Activated CD4-positive, alpha-beta T cell treated with anti-CD3 and anti-CD28 coated beads for 36 hours (primary cell): ENCODE measurements at regions of chr19 and their contacts with region 1.

Region 1: GRCh38 chr19:3035542-3036118 is 6.5 kb upstream of the TLE2 start:
- DNase-seq: peak; percentile 97
- ATAC-seq: peak; percentile 94
- H3K4me3 Mint-ChIP-seq: peak overlapping the region; percentile 83
- H3K27ac Mint-ChIP-seq: peak overlapping the region; percentile 96
- H3K4me1 Mint-ChIP-seq: peaks cover 19% of the 10 kb centered on the region
- H3K27me3 Mint-ChIP-seq: no peaks in the 10 kb centered on the region

Region 2: DNA sequence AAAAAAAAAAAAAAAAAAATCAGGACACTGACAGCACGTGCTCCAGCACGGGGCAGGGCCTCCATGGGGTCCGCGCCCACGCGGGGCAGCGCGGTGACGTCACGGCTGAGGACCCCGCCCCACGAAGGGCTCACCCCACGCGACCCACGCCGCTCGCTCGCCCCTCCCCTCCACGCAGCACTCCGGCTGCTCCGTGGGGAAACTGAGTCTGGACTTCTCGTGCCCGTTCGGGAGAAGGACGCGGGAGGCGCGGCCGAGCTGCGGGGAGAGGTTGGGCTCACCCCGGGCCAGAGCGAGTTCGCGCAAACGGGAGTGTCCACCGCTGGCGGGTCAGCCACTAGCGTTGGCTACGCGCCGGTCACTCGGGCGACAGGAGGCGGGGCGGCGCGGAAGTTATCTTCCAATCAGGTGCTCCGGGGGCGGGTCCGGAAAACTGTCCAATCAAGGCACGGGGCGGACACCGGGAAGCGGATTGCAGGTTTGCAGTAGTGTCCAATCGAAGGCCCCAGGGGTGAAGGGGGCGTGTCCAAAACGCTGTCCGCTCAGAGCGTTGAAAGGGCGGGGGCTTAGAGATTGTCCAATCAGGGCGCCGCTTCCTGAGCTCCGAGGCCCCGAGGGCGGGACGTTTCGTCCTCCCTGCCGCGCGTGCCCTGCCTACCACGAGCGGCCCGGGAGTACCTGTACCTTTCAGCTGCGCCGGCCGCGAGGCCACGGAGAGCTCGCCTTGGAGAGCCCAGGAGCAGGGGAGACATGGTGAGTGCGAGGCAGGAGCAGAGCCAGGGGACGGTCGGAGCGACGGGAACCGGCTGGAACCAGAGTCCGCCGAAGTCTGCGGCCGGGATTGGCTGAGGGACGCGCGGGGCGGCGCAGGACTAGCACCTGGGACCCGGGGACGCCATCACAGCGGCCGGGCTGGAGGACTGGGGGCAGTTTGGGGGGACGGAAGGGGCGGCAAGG is 135.1 kb before region 1 on chr19 and contains the start of gene ZNF57:
- CTCF ChIA-PET with region 1: no interaction called
- POLR2A ChIA-PET with region 1: interaction called, 4 read pairs
- intact Hi-C with region 1: loop called in 1 of 2 experiments (anchors 1 kb)
- DNase-seq: peak; percentile 100
- ATAC-seq: peak; percentile 99
- H3K4me3 Mint-ChIP-seq: peak within 1 kb of the TSS; percentile 98
- H3K27ac Mint-ChIP-seq: peak within 1 kb of the TSS; percentile 96
- H3K4me1 Mint-ChIP-seq: peaks cover 18% of the 10 kb centered on the region
- H3K27me3 Mint-ChIP-seq: no peaks in the 10 kb centered on the region
- total RNA-seq, gene ZNF57: 5.9 to 7.1 TPM

Region 3: GRCh38 chr19:2977001-2977685 is 58.5 kb before region 1 on chr19 and contains the start of gene TLE6:
- CTCF ChIA-PET with region 1: no interaction called
- POLR2A ChIA-PET with region 1: no interaction called
- intact Hi-C with region 1: loop called in 1 of 2 experiments (anchors 1 kb)
- DNase-seq: peak; percentile 98
- ATAC-seq: peak; percentile 100
- H3K4me3 Mint-ChIP-seq: peak within 1 kb of the TSS; percentile 77
- H3K27ac Mint-ChIP-seq: peak within 1 kb of the TSS; percentile 63
- H3K4me1 Mint-ChIP-seq: peaks cover 14% of the 10 kb centered on the region
- H3K27me3 Mint-ChIP-seq: peaks cover 4% of the 10 kb centered on the region
- total RNA-seq, gene TLE6: 2.6 to 3.5 TPM

Region 4: GRCh38 chr19:3062168-3063102 is 26.8 kb after region 1 on chr19 and contains the start of gene TLE5:
- CTCF ChIA-PET with region 1: interaction called, 5 read pairs
- POLR2A ChIA-PET with region 1: interaction called, 6 read pairs
- intact Hi-C with region 1: loop called in 1 of 2 experiments (anchors 1 kb)
- DNase-seq: peak; percentile 83
- ATAC-seq: peak; percentile 71
- H3K4me3 Mint-ChIP-seq: peak within 1 kb of the TSS; percentile 82
- H3K27ac Mint-ChIP-seq: peak within 1 kb of the TSS; percentile 97
- H3K4me1 Mint-ChIP-seq: peaks cover 35% of the 10 kb centered on the region
- H3K27me3 Mint-ChIP-seq: no peaks in the 10 kb centered on the region
- total RNA-seq, gene TLE5: 349 to 533 TPM

Region 5: GRCh38 chr19:3275583-3276340 is 240.1 kb after region 1 on chr19:
- CTCF ChIA-PET with region 1: no interaction called
- POLR2A ChIA-PET with region 1: no interaction called
- intact Hi-C with region 1: loop called in 1 of 2 experiments (anchors 1 kb)
- DNase-seq: peak; percentile 99
- ATAC-seq: peak; percentile 83
- H3K4me3 Mint-ChIP-seq: peak overlapping the region; percentile 73
- H3K27ac Mint-ChIP-seq: peak overlapping the region; percentile 80
- H3K4me1 Mint-ChIP-seq: peaks cover 8% of the 10 kb centered on the region
- H3K27me3 Mint-ChIP-seq: peaks cover 9% of the 10 kb centered on the region

Region 6: GRCh38 chr19:3434712-3435553 is 399.3 kb after region 1 on chr19:
- CTCF ChIA-PET with region 1: no interaction called
- POLR2A ChIA-PET with region 1: no interaction called
- intact Hi-C with region 1: loop called in 1 of 2 experiments (anchors 1 kb)
- DNase-seq: peak; percentile 98
- ATAC-seq: peak; percentile 96
- H3K4me3 Mint-ChIP-seq: peak overlapping the region; percentile 84
- H3K27ac Mint-ChIP-seq: peak overlapping the region; percentile 99
- H3K4me1 Mint-ChIP-seq: peaks cover 13% of the 10 kb centered on the region
- H3K27me3 Mint-ChIP-seq: no peaks in the 10 kb centered on the region

Region 7: DNA sequence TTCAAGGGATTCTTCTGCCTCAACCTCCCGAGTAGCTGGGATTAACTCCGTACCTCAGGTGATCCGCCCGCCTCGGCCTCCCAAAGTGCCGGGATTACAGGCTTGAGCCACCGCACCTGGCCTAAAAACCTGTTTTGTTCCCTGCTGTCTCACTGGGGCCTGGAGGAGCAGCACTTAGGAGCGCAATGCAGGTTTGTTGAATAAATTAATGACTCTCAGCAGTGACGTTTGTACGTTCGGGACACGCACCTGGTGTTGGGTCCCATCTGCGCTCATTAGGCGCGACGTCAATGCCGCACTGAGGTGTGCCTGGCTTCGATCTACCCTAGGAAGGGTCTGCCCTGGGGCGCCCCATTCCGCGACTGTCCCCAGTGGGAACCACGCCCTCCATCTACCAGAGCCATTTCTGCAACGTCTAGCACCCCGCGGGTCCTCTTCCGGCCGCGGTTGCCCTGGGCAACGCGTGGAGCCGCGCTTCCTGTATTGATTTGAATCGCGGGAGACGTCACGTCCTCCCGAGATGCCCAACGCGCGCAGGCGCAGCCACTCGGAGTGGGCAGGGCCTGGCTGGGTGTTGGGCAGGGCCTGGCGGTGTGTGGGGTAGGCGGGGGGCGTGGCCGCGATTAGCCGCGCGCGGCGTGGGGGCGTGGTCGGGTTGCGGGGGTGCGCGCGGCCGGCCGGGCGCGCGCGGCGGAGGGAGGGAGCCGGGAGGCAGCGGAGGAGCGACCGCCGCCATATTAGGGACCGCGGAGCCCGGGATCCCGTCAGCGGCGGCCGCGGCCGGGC is 470.2 kb after region 1 on chr19 and contains the start of gene FZR1:
- CTCF ChIA-PET with region 1: no interaction called
- POLR2A ChIA-PET with region 1: no interaction called
- intact Hi-C with region 1: loop called in 1 of 2 experiments (anchors 1 kb)
- DNase-seq: peak; percentile 100
- ATAC-seq: peak; percentile 92
- H3K4me3 Mint-ChIP-seq: peak within 1 kb of the TSS; percentile 84
- H3K27ac Mint-ChIP-seq: peak within 1 kb of the TSS; percentile 86
- H3K4me1 Mint-ChIP-seq: peaks cover 45% of the 10 kb centered on the region
- H3K27me3 Mint-ChIP-seq: no peaks in the 10 kb centered on the region
- total RNA-seq, gene FZR1: 40.8 to 50.7 TPM